Right cardiac atrium (tissue), 5 donors: ENCODE measurements at regions of chr1 and their contacts with region 1.

Region 1: GRCh38 chr1:33295450-33296081 is 25.3 kb downstream of the A3GALT2 start:
- DNase-seq: peak; percentile 82 to 93 (median 93)
- ATAC-seq: peak; percentile 78 to 81
- H3K4me3 ChIP-seq: no peak overlapping the region
- H3K27ac ChIP-seq: no peak overlapping the region
- H3K4me1 ChIP-seq: peaks cover 3% of the 10 kb centered on the region
- H3K27me3 ChIP-seq: no peaks in the 10 kb centered on the region

Region 2: DNA sequence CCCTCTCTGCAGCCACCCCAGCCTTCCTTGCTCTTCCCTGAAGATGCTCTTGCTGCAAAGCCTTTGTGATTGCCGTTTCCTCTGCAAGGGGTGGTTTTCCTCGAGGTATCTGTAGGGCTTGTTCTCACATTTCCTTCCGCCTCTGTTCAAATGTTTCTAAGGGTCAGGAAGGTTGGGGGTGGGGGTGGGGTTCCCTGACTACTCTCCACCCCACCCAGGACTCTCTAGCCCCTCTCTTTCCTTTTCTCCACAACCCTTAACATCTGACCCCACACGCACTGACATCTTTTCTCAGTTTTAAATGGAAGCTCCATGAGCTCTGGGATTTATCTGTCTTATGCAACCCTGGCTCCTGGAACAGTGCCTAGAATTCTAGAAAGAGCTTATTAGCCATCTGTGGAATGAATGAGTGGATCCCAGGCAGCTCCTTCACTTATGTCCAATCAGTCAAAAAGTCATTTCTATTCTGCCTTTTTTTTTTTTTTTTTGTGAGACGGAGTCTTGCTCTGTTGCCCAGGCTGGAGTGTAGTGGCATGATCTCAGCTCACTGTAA is 66.6 kb before region 1 on chr1:
- intact Hi-C with region 1: no loop called
- DNase-seq: peak in 1 of 3 donors; percentile 34
- ATAC-seq: peak; percentile 87 to 91
- H3K4me3 ChIP-seq: no peak overlapping the region
- H3K27ac ChIP-seq: peak overlapping the region; percentile 36
- H3K4me1 ChIP-seq: peaks cover 3% of the 10 kb centered on the region
- H3K27me3 ChIP-seq: no peaks in the 10 kb centered on the region

Region 3: GRCh38 chr1:33466159-33466558 is 170.6 kb after region 1 on chr1:
- intact Hi-C with region 1: loop called (anchors 2 to 10 kb)
- DNase-seq: peak in 1 of 3 donors; percentile 71
- ATAC-seq: peak in 1 of 2 donors; percentile 18
- H3K4me3 ChIP-seq: no peak overlapping the region
- H3K27ac ChIP-seq: no peak overlapping the region
- H3K4me1 ChIP-seq: peaks cover 8% of the 10 kb centered on the region
- H3K27me3 ChIP-seq: no peaks in the 10 kb centered on the region

Region 4: GRCh38 chr1:33482412-33482811 is 186.8 kb after region 1 on chr1:
- intact Hi-C with region 1: no loop called
- DNase-seq: no peak
- ATAC-seq: no peak
- H3K4me3 ChIP-seq: no peak overlapping the region
- H3K27ac ChIP-seq: no peak overlapping the region
- H3K4me1 ChIP-seq: no peaks in the 10 kb centered on the region
- H3K27me3 ChIP-seq: no peaks in the 10 kb centered on the region

Region 5: GRCh38 chr1:33616773-33617172 is 321.2 kb after region 1 on chr1:
- intact Hi-C with region 1: loop called in 3 of 4 experiments (anchors 10 kb)
- DNase-seq: no peak
- ATAC-seq: peak in 1 of 2 donors; percentile 33
- H3K4me3 ChIP-seq: no peak overlapping the region
- H3K27ac ChIP-seq: no peak overlapping the region
- H3K4me1 ChIP-seq: no peaks in the 10 kb centered on the region
- H3K27me3 ChIP-seq: no peaks in the 10 kb centered on the region